ENCODE measurements at regions of chr1 and their contacts with region 1.

Region 1: GRCh38 chr1:44652445-44653106 is 21.7 kb downstream of the TMEM53 start:
- DNase-seq: peak; percentile 87
- ATAC-seq: peak; percentile 95
- H3K4me3 ChIP-seq: no peak overlapping the region
- H3K27ac ChIP-seq: no peak overlapping the region
- H3K4me1 ChIP-seq: no peaks in the 10 kb centered on the region
- H3K27me3 ChIP-seq: no peaks in the 10 kb centered on the region
- CTCF ChIP-seq: peak; percentile 95

Region 2: DNA sequence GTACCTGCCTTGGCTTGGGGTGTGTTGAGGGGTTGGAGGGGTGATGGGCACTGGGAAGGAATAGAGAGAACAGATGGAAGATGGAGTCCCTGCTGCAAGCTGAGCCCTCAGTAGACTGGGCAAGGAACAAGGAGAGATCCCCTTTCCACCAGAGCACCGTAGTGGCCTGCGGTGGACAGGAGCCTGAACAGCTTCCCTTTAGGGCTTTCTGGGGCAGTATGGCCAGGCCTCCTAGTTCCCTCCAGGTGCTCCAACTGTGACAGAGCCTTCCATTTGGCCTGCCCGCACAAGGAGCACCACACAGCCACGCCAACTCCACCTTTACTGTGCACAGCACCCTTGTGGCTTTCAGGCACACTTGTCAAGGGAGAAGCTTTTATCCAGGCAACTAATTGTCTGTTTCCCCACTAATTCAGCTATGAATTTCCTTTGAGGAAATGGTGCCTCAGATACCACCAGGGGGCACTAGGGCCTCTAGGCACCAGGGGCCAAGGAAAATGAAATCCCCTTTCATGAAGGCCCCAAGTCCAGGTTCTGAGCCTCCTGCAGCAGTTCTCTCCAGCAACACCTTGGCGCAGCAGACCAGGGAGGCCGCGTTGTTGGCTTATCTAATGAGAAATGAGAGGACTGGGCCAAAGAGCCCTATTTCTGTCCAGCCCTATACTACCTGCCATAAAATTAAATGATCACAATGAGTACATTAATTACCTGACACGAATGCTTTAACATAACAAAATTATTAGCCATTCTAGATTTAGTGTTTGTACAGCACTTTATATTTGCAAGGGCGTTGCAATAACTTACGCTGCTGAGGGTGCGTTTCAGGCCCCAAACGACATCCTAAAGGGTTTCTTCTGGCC is 274.4 kb before region 1 on chr1:
- CTCF ChIA-PET with region 1: interaction called, 7 read pairs
- POLR2A ChIA-PET with region 1: no interaction called
- intact Hi-C with region 1: loop called (anchors 2 kb)
- DNase-seq: peak; percentile 76
- ATAC-seq: peak; percentile 53
- H3K4me3 ChIP-seq: no peak overlapping the region
- H3K27ac ChIP-seq: no peak overlapping the region
- H3K4me1 ChIP-seq: no peaks in the 10 kb centered on the region
- H3K27me3 ChIP-seq: no peaks in the 10 kb centered on the region
- CTCF ChIP-seq: peak; percentile 88

Region 3: GRCh38 chr1:44571712-44572571 is 80.6 kb before region 1 on chr1:
- CTCF ChIA-PET with region 1: no interaction called
- POLR2A ChIA-PET with region 1: no interaction called
- intact Hi-C with region 1: loop called (anchors 1 kb)
- DNase-seq: peak; percentile 53
- ATAC-seq: peak; percentile 57; the same call in 1 of the 2 replicates
- H3K4me3 ChIP-seq: no peak overlapping the region
- H3K27ac ChIP-seq: no peak overlapping the region
- H3K4me1 ChIP-seq: peaks cover 12% of the 10 kb centered on the region
- H3K27me3 ChIP-seq: no peaks in the 10 kb centered on the region
- CTCF ChIP-seq: peak; percentile 72

Region 4: DNA sequence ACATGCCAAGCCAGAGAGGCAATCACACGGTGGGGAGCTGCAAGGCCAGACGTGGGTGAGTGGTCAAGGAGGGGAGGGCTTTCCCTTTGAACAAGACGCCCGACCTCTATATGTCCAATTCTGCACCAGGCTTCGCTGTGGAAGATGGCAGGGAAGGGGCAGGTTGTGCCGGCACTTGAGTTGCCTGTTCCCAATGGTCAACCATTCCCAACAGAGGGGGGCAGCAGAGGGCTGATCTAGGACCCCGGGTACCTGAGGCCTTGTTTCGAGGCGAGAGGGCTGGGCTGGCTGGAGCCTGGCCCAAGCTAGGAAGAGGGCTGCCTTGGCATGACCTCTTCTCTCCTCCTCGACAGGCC is 43.2 kb before region 1 on chr1:
- CTCF ChIA-PET with region 1: no interaction called
- POLR2A ChIA-PET with region 1: no interaction called
- intact Hi-C with region 1: loop called (anchors 2 kb)
- DNase-seq: peak; percentile 58
- ATAC-seq: no peak
- H3K4me3 ChIP-seq: no peak overlapping the region
- H3K27ac ChIP-seq: no peak overlapping the region
- H3K4me1 ChIP-seq: peaks cover 22% of the 10 kb centered on the region
- H3K27me3 ChIP-seq: no peaks in the 10 kb centered on the region
- CTCF ChIP-seq: peak; percentile 64

Region 5: DNA sequence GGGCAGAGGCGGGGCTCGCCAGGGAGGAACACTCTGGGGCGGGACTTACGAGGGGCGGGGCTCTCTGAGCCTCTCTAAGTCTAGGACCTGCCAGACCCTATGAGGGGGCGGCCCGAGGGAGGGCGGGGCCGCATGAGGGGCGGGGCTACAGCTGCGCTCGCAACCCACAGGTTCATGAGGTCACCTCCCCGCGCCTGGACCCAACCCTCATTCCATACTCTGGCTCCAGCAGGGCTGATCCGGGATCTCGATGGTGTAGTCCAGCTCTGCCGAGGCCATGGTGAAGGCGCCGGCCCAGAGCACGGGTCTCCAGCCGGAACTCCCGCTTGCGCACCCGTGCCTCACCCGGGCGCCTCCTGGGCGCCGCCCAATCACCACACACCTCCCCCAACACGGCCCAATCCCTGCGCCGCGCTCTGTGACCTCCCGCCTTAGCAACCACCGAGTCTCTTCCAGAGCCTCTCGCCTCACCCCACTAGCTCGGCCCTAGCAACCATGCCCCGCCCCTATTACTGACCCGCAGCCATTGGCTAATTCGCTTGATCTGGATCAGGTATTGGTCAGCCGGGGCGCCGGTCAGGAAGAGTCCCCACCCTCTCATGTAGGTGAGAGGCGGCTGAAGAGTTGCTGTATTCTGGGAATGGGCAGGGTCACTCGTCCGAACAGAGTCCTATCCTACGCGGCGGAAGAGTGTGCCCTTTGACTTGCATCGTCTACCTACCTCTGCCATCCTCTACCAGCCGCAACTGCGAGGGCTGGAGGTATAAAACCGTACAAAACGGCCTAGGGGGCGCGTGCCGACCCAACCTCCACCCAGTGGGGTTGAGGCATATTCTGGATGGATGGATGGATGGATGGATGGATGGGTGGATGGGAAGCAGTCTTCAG is 21.8 kb after region 1 on chr1 and contains the starts of genes ARMH1 and TMEM53:
- CTCF ChIA-PET with region 1: no interaction called
- POLR2A ChIA-PET with region 1: no interaction called
- intact Hi-C with region 1: loop called (anchors 1 kb)
- DNase-seq: peak; percentile 99
- ATAC-seq: peak; percentile 91
- H3K4me3 ChIP-seq: peak within 1 kb of the TSS; percentile 79
- H3K27ac ChIP-seq: peak within 1 kb of the TSS; percentile 78
- H3K4me1 ChIP-seq: peaks cover 42% of the 10 kb centered on the region
- H3K27me3 ChIP-seq: no peaks in the 10 kb centered on the region
- CTCF ChIP-seq: 0 out of 2 replicates have a peak, but pooled peaks have one; percentile 20
- total RNA-seq, gene ARMH1: 0.15 TPM in 1 of 2 replicates, not detected in the other
- total RNA-seq, gene TMEM53: 9.3 and 12.0 TPM in 2 replicates

Region 6: GRCh38 chr1:44707112-44707881 is 54.7 kb after region 1 on chr1:
- CTCF ChIA-PET with region 1: no interaction called
- POLR2A ChIA-PET with region 1: no interaction called
- intact Hi-C with region 1: no loop called
- DNase-seq: peak; percentile 96
- ATAC-seq: peak; percentile 99
- H3K4me3 ChIP-seq: no peak overlapping the region
- H3K27ac ChIP-seq: peak overlapping the region; percentile 88
- H3K4me1 ChIP-seq: peaks cover 34% of the 10 kb centered on the region
- H3K27me3 ChIP-seq: no peaks in the 10 kb centered on the region
- CTCF ChIP-seq: no peak

Region 7: GRCh38 chr1:44924835-44925513 is 272.4 kb after region 1 on chr1:
- CTCF ChIA-PET with region 1: no interaction called
- POLR2A ChIA-PET with region 1: no interaction called
- intact Hi-C with region 1: no loop called
- DNase-seq: peak; percentile 85
- ATAC-seq: peak; percentile 94
- H3K4me3 ChIP-seq: peak overlapping the region; percentile 50; the same call in 1 of the 2 replicates
- H3K27ac ChIP-seq: peak overlapping the region; percentile 30
- H3K4me1 ChIP-seq: peaks cover 14% of the 10 kb centered on the region
- H3K27me3 ChIP-seq: no peaks in the 10 kb centered on the region
- CTCF ChIP-seq: peak; percentile 55